ENCODE measurements at regions of chr17 and their contacts with region 1.

Region 1: GRCh38 chr17:7323731-7324437 is 5.3 kb downstream of the NEURL4 start:
- DNase-seq: peak; percentile 75
- ATAC-seq: peak; percentile 37
- H3K4me3 ChIP-seq: no peak overlapping the region
- H3K4me3 Mint-ChIP-seq: no peak overlapping the region
- H3K27ac ChIP-seq: no peak overlapping the region
- H3K27ac Mint-ChIP-seq: peak overlapping the region; percentile 20
- H3K4me1 ChIP-seq: peaks cover 7 to 13% of the 10 kb centered on the region in 2 donors
- H3K4me1 Mint-ChIP-seq: peaks cover 17% of the 10 kb centered on the region
- H3K27me3 ChIP-seq: no peaks in the 10 kb centered on the region
- H3K27me3 Mint-ChIP-seq: no peaks in the 10 kb centered on the region
- CTCF ChIP-seq: peak; percentile 91

Region 2: GRCh38 chr17:7344399-7344798 is 20.5 kb after region 1 on chr17:
- CTCF ChIA-PET with region 1: interaction called, 47 read pairs
- POLR2A ChIA-PET with region 1: interaction called, 17 read pairs
- intact Hi-C with region 1: loop called (anchors 1 kb)
- DNase-seq: no peak
- ATAC-seq: no peak
- H3K4me3 ChIP-seq: no peak overlapping the region
- H3K4me3 Mint-ChIP-seq: no peak overlapping the region
- H3K27ac ChIP-seq: no peak overlapping the region
- H3K27ac Mint-ChIP-seq: no peak overlapping the region
- H3K4me1 ChIP-seq: peaks cover 0 to 6% of the 10 kb centered on the region in 2 donors
- H3K4me1 Mint-ChIP-seq: peaks cover 7% of the 10 kb centered on the region
- H3K27me3 ChIP-seq: no peaks in the 10 kb centered on the region
- H3K27me3 Mint-ChIP-seq: no peaks in the 10 kb centered on the region
- CTCF ChIP-seq: no peak

Measured in B cell (primary cell).